Activated T-helper 2 cell treated with anti-CD3 and anti-CD28 coated beads, Interferon-gamma antibody, Interleukin-2, Interleukin-4, amounts not matched to agents 10 μg/mL and 5 μg/mL and 100 μg/mL, durations not matched to agents 14 hours and 24 hours and 36 hours (primary cell): ENCODE measurements at regions of chr1 and their contacts with region 1.

Region 1: GRCh38 chr1:179742717-179743678 is at the start of gene FAM163A:
- DNase-seq: no peak
- H3K4me3 Mint-ChIP-seq: no peak within 1 kb of the TSS
- H3K27ac Mint-ChIP-seq: no peak within 1 kb of the TSS
- H3K4me1 Mint-ChIP-seq: peaks cover 6% of the 10 kb centered on the region
- H3K27me3 Mint-ChIP-seq: peaks cover 67% of the 10 kb centered on the region
- total RNA-seq, gene FAM163A: not detected in 2 replicates

Region 2: GRCh38 chr1:180229974-180230790 is 487.2 kb after region 1 on chr1 and contains the start of gene LHX4:
- intact Hi-C with region 1: loop called (anchors 10 kb)
- DNase-seq: no peak
- H3K4me3 Mint-ChIP-seq: peak within 1 kb of the TSS; percentile 66
- H3K27ac Mint-ChIP-seq: no peak within 1 kb of the TSS
- H3K4me1 Mint-ChIP-seq: peaks cover 13% of the 10 kb centered on the region
- H3K27me3 Mint-ChIP-seq: peaks cover 79% of the 10 kb centered on the region
- total RNA-seq, gene LHX4: not detected in 2 replicates